ENCODE measurements at regions of chr4 and their contacts with region 1.

Region 1: DNA sequence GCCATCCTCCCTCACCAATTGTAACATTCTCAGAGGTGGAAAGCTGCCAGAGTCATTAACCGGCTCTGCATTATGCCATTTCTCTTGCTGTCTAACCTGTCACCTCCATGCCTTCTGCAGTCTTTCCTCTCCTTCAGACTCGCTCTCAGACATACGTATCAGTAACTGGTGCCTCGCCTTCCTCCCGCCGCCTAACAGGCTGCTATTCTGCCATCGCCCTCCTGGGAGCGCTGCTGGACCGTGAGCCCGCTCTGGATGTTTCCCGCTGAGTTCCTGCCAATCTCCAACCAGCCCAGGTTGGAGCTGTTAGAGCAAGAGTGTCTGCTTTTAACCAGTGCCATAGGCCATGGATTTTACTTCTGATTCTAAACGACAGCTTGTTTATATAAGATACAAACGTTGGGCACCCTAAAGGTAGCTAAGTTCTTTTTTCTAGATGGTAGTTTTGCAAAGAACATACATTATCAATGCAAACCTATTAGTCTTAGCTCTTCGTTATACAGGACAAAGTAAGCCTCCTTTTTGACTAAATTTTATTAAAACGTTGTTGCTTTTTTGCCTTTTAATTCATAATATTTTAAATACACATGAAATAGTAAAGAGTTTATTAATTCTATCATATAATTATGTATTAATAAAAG is 59.5 kb upstream of the NEIL3 start:
- DNase-seq: peak; percentile 50 to 87 (median 72)
- H3K4me3 ChIP-seq: no peak overlapping the region
- H3K27ac ChIP-seq: no peak overlapping the region
- H3K4me1 ChIP-seq: no peaks in the 10 kb centered on the region
- H3K27me3 ChIP-seq: no peaks in the 10 kb centered on the region
- CTCF ChIP-seq: peak; percentile 75 to 93 (median 91)
- POLR2A ChIP-seq: no peak

Region 2: DNA sequence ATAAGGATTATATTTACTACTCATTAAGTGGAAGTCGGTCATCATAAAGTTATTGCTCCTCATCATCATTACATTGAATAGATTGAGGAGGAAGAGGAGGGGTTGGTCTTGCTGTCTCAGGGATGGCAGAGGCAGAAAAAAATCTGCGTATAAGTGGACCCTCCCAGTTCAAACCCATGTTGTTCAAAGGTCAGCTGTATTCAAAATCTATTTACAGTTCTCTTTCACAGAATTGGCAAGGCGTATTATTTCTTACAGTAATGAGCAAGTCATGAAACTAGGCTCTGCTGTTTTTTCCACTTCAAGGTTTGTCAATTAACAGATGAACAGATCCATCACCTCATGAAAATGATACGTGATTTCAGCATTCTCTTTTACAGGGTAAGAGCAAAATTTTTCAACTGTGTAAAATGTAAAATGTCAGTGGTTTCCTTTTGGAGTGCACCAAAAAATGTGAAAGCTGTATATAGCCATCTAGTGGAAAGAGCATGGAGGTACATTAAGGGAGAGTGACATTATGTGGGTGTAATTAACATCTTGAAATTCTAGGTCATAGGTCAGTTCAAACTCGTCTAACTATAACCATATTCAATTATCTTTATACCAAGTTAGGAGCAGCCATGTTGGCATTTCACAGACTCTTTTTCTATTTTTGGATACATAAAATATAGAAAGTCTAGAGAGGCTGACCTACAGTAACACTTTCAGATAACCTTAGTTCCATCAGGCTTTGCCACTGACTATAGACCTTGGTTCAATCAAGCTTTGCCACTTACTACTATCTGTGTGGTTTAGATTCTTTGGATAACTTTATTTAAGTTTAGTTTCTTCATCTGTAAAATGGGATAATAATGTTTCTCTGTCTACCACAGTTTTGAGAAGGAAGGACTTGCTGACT is 89.5 kb after region 1 on chr4:
- intact Hi-C with region 1: loop called in 1 of 2 experiments (anchors 5 kb)
- DNase-seq: no peak
- H3K4me3 ChIP-seq: no peak overlapping the region
- H3K27ac ChIP-seq: no peak overlapping the region
- H3K4me1 ChIP-seq: no peaks in the 10 kb centered on the region
- H3K27me3 ChIP-seq: no peaks in the 10 kb centered on the region
- CTCF ChIP-seq: peak; percentile 57 to 82 (median 66)
- POLR2A ChIP-seq: no peak

Measured in adrenal gland (tissue), 19 donors.